ENCODE measurements at regions of chr2 and their contacts with region 1.

Region 1: GRCh38 chr2:190069936-190070696 is 7.6 kb upstream of the MSTN start:
- DNase-seq: peak in 1 of 2 experiments; percentile 6
- H3K4me3 ChIP-seq: no peak overlapping the region
- H3K27ac ChIP-seq: no peak overlapping the region
- H3K4me1 ChIP-seq: no peaks in the 10 kb centered on the region
- H3K27me3 ChIP-seq: no peaks in the 10 kb centered on the region
- CTCF ChIP-seq: peak; percentile 71

Region 2: DNA sequence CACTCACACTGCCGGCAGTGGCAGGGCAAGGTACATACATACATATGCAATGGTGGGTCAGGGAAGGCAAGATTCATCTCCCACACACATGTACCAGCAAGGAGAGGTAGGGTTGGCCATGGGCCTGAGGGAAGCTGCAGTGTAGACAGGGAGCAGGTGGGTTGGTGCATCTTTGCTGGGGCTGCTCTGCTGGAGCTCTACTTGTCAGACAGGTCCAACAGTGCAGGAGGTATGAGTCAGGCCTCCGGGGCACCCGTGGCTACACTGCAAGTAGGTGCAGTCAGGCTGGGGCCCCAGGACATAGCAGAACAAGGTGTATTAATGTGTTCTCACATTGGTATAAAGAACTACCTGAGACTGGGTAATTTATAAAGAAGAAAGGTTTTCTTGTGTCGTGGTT is 1377.0 kb before region 1 on chr2:
- CTCF ChIA-PET with region 1: no interaction called
- POLR2A ChIA-PET with region 1: no interaction called
- intact Hi-C with region 1: no loop called
- DNase-seq: peak; percentile 55 to 60
- H3K4me3 ChIP-seq: no peak overlapping the region
- H3K27ac ChIP-seq: no peak overlapping the region
- H3K4me1 ChIP-seq: peaks cover 19% of the 10 kb centered on the region
- H3K27me3 ChIP-seq: no peaks in the 10 kb centered on the region
- CTCF ChIP-seq: no peak

Region 3: GRCh38 chr2:189466660-189467059 is 603.5 kb before region 1 on chr2:
- CTCF ChIA-PET with region 1: no interaction called
- POLR2A ChIA-PET with region 1: no interaction called
- intact Hi-C with region 1: loop called (anchors 5 kb)
- DNase-seq: no peak
- H3K4me3 ChIP-seq: no peak overlapping the region
- H3K27ac ChIP-seq: no peak overlapping the region
- H3K4me1 ChIP-seq: no peaks in the 10 kb centered on the region
- H3K27me3 ChIP-seq: no peaks in the 10 kb centered on the region
- CTCF ChIP-seq: peak; percentile 67

Region 4: GRCh38 chr2:189661148-189661956 is 408.8 kb before region 1 on chr2 and contains the start of gene ASNSD1:
- CTCF ChIA-PET with region 1: no interaction called
- POLR2A ChIA-PET with region 1: no interaction called
- intact Hi-C with region 1: loop called (anchors 1 kb)
- DNase-seq: peak; percentile 94 to 96
- H3K4me3 ChIP-seq: peak within 1 kb of the TSS; percentile 92
- H3K27ac ChIP-seq: no peak within 1 kb of the TSS
- H3K4me1 ChIP-seq: peaks cover 21% of the 10 kb centered on the region
- H3K27me3 ChIP-seq: no peaks in the 10 kb centered on the region
- CTCF ChIP-seq: peak; percentile 87
- total RNA-seq, gene ASNSD1: 14.8 TPM in 2 replicates

Region 5: GRCh38 chr2:189751080-189751658 is 318.9 kb before region 1 on chr2:
- CTCF ChIA-PET with region 1: no interaction called
- POLR2A ChIA-PET with region 1: no interaction called
- intact Hi-C with region 1: loop called (anchors 2 kb)
- DNase-seq: peak in 1 of 2 experiments; percentile 10
- H3K4me3 ChIP-seq: no peak overlapping the region
- H3K27ac ChIP-seq: no peak overlapping the region
- H3K4me1 ChIP-seq: no peaks in the 10 kb centered on the region
- H3K27me3 ChIP-seq: no peaks in the 10 kb centered on the region
- CTCF ChIP-seq: peak; percentile 62

Region 6: DNA sequence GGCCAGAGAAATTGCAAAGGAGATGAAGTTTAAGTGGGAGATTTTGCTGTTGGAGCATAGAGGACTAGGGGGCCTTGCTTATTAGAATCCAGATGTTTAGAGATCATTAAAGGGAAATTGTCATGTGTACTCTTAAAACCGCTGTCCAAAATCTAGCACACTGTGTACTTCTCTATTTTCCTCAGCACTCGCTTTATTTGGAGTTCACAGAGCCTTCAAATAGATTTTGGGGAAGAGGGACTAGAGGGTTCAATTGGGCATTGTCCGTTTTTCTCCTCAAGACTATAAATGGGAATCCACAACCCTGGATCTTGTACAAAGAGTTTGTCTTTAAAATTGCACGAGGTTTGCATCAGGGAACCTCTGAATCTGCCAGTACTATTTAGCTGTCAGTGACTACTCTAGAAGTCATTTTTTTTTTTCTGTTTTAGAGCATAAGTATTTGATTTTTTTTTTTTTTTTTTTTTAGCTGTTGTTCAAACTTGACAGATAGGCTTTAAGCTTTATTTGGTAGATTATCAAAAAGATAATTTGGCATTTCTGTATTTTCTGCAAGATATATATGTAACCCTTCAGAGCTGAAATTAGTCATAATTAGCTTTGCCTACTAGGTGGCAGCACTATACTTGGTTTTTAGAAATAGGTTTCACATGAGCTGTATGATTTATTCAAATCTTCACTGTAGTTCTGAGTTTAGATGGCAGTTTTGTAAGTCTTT is 271.6 kb before region 1 on chr2:
- CTCF ChIA-PET with region 1: interaction called, 5 read pairs
- POLR2A ChIA-PET with region 1: interaction called, 12 read pairs
- intact Hi-C with region 1: loop called (anchors 2 kb)
- DNase-seq: no peak
- H3K4me3 ChIP-seq: no peak overlapping the region
- H3K27ac ChIP-seq: no peak overlapping the region
- H3K4me1 ChIP-seq: no peaks in the 10 kb centered on the region
- H3K27me3 ChIP-seq: no peaks in the 10 kb centered on the region
- CTCF ChIP-seq: peak; percentile 55

Region 7: DNA sequence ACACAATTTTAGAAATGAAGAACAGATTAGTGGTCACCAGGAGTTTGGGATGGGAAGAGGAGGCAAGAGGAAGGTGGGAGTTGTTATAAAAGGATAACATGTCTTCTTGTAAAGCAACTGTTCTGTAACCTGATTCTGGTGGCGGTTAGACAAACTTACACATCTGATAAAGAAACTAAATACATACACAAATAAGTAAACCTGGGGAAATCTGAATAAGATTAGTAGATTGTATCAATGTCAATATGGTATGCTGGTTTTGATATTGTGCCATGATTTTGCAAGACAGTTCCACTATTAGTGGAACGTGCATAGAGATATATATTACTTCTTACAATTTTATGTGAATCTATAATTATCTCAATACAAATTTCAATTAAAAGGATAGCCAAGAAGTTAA is 103.6 kb before region 1 on chr2:
- CTCF ChIA-PET with region 1: no interaction called
- POLR2A ChIA-PET with region 1: no interaction called
- intact Hi-C with region 1: no loop called
- DNase-seq: no peak
- H3K4me3 ChIP-seq: no peak overlapping the region
- H3K27ac ChIP-seq: no peak overlapping the region
- H3K4me1 ChIP-seq: no peaks in the 10 kb centered on the region
- H3K27me3 ChIP-seq: no peaks in the 10 kb centered on the region
- CTCF ChIP-seq: no peak

Measured in PC-9 (cell line).